ENCODE measurements at regions of chr5 and their contacts with region 1.

Region 1: GRCh38 chr5:116546033-116546728 is 28.4 kb downstream of the SEMA6A start:
- DNase-seq: peak; percentile 82 to 91
- H3K4me3 ChIP-seq: no peak overlapping the region
- H3K4me3 Mint-ChIP-seq: peak overlapping the region; percentile 16
- H3K27ac Mint-ChIP-seq: peak overlapping the region; percentile 38
- H3K4me1 ChIP-seq: peaks cover 46% of the 10 kb centered on the region
- H3K4me1 Mint-ChIP-seq: peaks cover 33% of the 10 kb centered on the region
- H3K27me3 ChIP-seq: no peaks in the 10 kb centered on the region
- H3K27me3 Mint-ChIP-seq: no peaks in the 10 kb centered on the region
- CTCF ChIP-seq: no peak

Region 2: DNA sequence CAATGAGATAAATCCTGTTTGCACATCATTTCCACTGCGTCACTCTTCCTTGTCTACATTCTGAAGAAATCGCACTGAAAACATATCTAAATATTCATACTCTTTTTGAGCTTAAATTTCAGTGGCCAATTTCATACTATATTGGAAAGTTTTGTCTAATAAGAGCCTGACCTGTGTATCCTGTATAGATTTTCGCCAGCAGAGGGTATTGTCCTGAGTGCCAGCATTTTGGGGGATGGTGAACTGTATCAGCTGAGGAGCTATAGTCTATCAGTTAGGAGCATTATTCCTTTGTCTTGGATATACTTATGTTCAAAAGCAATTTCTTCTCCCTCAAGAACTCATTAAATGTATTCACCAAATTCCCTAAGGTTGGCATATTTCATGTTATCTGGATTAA is 73.9 kb before region 1 on chr5:
- CTCF ChIA-PET with region 1: no interaction called
- POLR2A ChIA-PET with region 1: no interaction called
- intact Hi-C with region 1: loop called (anchors 2 kb)
- DNase-seq: peak in 1 of 2 experiments; percentile 10
- H3K4me3 ChIP-seq: no peak overlapping the region
- H3K4me3 Mint-ChIP-seq: no peak overlapping the region
- H3K27ac Mint-ChIP-seq: no peak overlapping the region
- H3K4me1 ChIP-seq: no peaks in the 10 kb centered on the region
- H3K4me1 Mint-ChIP-seq: peaks cover 6% of the 10 kb centered on the region
- H3K27me3 ChIP-seq: no peaks in the 10 kb centered on the region
- H3K27me3 Mint-ChIP-seq: no peaks in the 10 kb centered on the region
- CTCF ChIP-seq: peak; percentile 17 to 39

Region 3: GRCh38 chr5:116626272-116626723 is 80.1 kb after region 1 on chr5:
- CTCF ChIA-PET with region 1: no interaction called
- POLR2A ChIA-PET with region 1: no interaction called
- intact Hi-C with region 1: no loop called
- DNase-seq: no peak
- H3K4me3 ChIP-seq: no peak overlapping the region
- H3K4me3 Mint-ChIP-seq: no peak overlapping the region
- H3K27ac Mint-ChIP-seq: no peak overlapping the region
- H3K4me1 ChIP-seq: no peaks in the 10 kb centered on the region
- H3K4me1 Mint-ChIP-seq: no peaks in the 10 kb centered on the region
- H3K27me3 ChIP-seq: no peaks in the 10 kb centered on the region
- H3K27me3 Mint-ChIP-seq: no peaks in the 10 kb centered on the region
- CTCF ChIP-seq: no peak

Measured in Caco-2 (cell line).